Sigmoid colon (tissue), 7 donors: ENCODE measurements at regions of chr11 and their contacts with region 1.

Region 1: GRCh38 chr11:114059278-114059983 is at the start of gene ZBTB16:
- DNase-seq: peak; percentile 98
- H3K4me3 ChIP-seq: peak within 1 kb of the TSS; percentile 68 to 99 (median 92)
- H3K27ac ChIP-seq: peak within 1 kb of the TSS; percentile 94 to 99 (median 96)
- H3K4me1 ChIP-seq: peaks cover 0 to 42% (median 38%) of the 10 kb centered on the region in 4 donors
- H3K27me3 ChIP-seq: no peaks in the 10 kb centered on the region
- CTCF ChIP-seq: peak in 1 of 4 experiments; percentile 34
- EP300 ChIP-seq: peak in 3 of 4 donors; percentile 53 to 81 (median 56)
- POLR2A ChIP-seq: peak; percentile 90 to 91
- total RNA-seq, gene ZBTB16: 99.5 to 197 (median 129) TPM

Region 2: DNA sequence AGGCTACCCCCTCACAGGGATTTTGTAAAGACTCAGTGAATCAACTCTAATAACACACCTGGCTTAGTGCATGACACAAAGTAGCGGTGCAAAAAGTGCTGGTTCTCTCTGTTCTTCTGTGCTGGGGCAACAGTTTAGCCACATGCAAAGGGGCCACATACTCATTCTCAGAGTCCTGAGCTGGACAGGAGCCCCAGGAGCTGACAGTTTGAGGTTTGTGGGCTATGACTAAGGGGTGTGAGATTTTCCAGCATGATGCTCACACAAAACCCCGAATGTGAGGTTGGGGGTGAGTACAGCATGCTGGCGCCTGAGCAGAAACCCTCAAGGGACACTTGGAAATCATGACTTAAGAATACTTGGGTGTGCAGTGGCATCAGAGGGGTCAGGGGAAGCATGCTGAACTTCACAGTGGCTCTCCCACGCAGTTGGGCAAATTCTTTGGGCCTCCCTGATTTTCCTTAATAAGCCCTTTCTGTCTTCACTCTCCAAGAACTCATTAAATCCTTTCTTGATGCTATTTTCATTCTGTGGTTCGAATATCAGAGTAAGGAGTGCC is 384.3 kb before region 1 on chr11:
- intact Hi-C with region 1: no loop called
- DNase-seq: no peak
- H3K4me3 ChIP-seq: no peak overlapping the region
- H3K27ac ChIP-seq: no peak overlapping the region
- H3K4me1 ChIP-seq: no peaks in the 10 kb centered on the region
- H3K27me3 ChIP-seq: no peaks in the 10 kb centered on the region
- CTCF ChIP-seq: no peak
- EP300 ChIP-seq: no peak
- POLR2A ChIP-seq: no peak

Region 3: DNA sequence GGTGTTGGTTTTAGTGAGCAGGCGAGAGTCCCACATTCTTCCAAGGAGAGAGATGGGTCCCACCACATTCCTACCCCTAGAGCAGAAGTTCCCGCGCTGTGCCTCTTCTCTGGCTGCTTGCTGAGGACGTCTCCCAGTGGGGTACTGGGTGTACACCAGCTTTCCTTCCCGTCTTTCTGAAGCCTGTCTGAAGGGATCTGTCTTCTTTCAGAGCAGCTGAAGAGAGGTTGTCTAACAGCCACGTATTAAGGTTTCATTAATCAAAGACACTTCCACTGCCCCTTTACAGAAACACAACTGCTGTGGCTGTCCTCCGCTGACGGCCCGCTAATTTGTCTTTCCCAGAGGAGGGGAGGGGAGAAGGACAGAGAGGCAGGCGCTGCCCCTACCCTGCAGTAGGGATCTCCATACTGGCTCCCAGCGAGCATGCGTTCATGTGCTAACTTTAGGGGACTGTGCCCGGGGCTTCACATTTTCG is 56.1 kb after region 1 on chr11:
- intact Hi-C with region 1: loop called (anchors 5 kb)
- DNase-seq: peak; percentile 60
- H3K4me3 ChIP-seq: no peak overlapping the region
- H3K27ac ChIP-seq: no peak overlapping the region
- H3K4me1 ChIP-seq: peaks cover 0 to 87% (median 62%) of the 10 kb centered on the region in 4 donors
- H3K27me3 ChIP-seq: no peaks in the 10 kb centered on the region
- CTCF ChIP-seq: peak in 1 of 4 experiments; percentile 9
- EP300 ChIP-seq: no peak
- POLR2A ChIP-seq: no peak

Region 4: GRCh38 chr11:114135737-114136151 is 76.3 kb after region 1 on chr11:
- intact Hi-C with region 1: no loop called
- DNase-seq: peak; percentile 47
- H3K4me3 ChIP-seq: no peak overlapping the region
- H3K27ac ChIP-seq: peak overlapping the region; percentile 27 to 86 (median 45)
- H3K4me1 ChIP-seq: peaks cover 0 to 100% (median 98%) of the 10 kb centered on the region in 4 donors
- H3K27me3 ChIP-seq: no peaks in the 10 kb centered on the region
- CTCF ChIP-seq: no peak
- EP300 ChIP-seq: no peak
- POLR2A ChIP-seq: no peak

Region 5: DNA sequence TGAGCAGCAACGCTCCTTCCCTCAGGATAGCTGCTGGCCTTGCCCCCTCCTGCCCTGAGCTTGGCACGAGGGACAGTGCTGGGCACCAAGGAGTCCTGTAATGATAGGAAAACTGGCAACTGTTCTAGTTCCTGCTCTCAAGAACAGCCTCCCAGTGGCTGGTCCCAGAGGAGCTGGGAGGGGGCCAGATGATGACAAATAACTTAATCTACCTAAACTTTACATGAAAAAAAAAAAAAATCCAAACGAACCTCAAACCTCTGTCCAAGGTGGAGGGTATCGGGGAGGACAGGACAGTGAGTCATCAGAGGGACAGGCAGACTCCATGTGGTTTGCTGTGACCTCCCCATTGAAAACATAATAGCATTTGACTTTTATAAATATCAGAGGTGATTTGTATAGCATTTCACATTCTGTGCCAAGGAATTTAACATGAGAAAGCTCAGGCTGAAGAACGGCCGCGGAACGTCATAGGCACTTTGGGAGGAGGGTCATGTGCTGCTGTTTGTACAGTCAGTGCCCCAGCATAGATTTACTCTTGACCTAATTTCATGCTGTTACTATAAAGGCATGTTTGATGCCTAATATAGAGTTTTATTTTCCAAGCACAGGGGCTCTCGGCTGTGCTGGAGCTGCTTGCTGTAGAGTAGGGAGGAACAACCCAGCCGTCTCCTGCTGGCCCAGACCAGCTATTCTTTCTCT is 138.5 kb after region 1 on chr11:
- intact Hi-C with region 1: loop called (anchors 2 kb)
- DNase-seq: peak; percentile 97
- H3K4me3 ChIP-seq: peak overlapping the region in 1 of 4 donors; percentile 6
- H3K27ac ChIP-seq: peak overlapping the region; percentile 94 to 99 (median 96)
- H3K4me1 ChIP-seq: peaks cover 0 to 99% (median 94%) of the 10 kb centered on the region in 4 donors
- H3K27me3 ChIP-seq: no peaks in the 10 kb centered on the region
- CTCF ChIP-seq: no peak
- EP300 ChIP-seq: peak; percentile 100
- POLR2A ChIP-seq: peak; percentile 11 to 61

Region 6: GRCh38 chr11:114233755-114234154 is 174.3 kb after region 1 on chr11:
- intact Hi-C with region 1: no loop called
- DNase-seq: no peak
- H3K4me3 ChIP-seq: no peak overlapping the region
- H3K27ac ChIP-seq: no peak overlapping the region
- H3K4me1 ChIP-seq: peaks cover 0 to 49% (median 34%) of the 10 kb centered on the region in 4 donors
- H3K27me3 ChIP-seq: no peaks in the 10 kb centered on the region
- CTCF ChIP-seq: no peak
- EP300 ChIP-seq: no peak
- POLR2A ChIP-seq: no peak

Region 7: GRCh38 chr11:114257621-114258558 is 198.5 kb after region 1 on chr11:
- intact Hi-C with region 1: loop called (anchors 1 kb)
- DNase-seq: peak; percentile 92
- H3K4me3 ChIP-seq: peak overlapping the region in 2 of 4 donors; percentile 11 to 13
- H3K27ac ChIP-seq: peak overlapping the region; percentile 77 to 85 (median 78)
- H3K4me1 ChIP-seq: peaks cover 0 to 63% (median 48%) of the 10 kb centered on the region in 4 donors
- H3K27me3 ChIP-seq: no peaks in the 10 kb centered on the region
- CTCF ChIP-seq: peak in 1 of 4 experiments; percentile 11
- EP300 ChIP-seq: no peak
- POLR2A ChIP-seq: no peak

Region 8: DNA sequence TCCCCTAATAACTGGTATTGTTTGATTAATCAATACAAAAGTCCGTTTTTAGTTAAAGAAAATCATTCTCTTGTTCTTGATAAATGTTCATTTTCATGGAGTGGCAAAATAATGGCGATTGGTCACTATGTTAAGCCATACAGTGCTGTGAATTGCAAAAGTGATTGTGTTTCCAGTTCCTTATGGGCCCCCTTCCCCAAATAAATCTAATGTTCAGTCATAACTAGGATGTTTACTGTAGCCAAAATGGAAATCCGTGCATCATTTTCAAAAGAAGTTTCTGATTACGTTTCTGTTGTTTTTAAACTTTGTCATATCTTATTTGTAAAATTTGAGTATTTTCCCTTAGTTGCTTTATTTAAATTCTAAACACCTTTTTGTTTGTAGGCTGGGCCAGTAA is 341.9 kb after region 1 on chr11:
- intact Hi-C with region 1: no loop called
- DNase-seq: no peak
- H3K4me3 ChIP-seq: peak overlapping the region; percentile 64 to 86 (median 79)
- H3K27ac ChIP-seq: peak overlapping the region; percentile 91 to 97 (median 92)
- H3K4me1 ChIP-seq: peaks cover 0 to 57% (median 50%) of the 10 kb centered on the region in 4 donors
- H3K27me3 ChIP-seq: no peaks in the 10 kb centered on the region
- CTCF ChIP-seq: no peak
- EP300 ChIP-seq: no peak
- POLR2A ChIP-seq: no peak